Dorsolateral prefrontal cortex (tissue), 120 donors: ENCODE measurements at regions of chr4 and their contacts with region 1.

Region 1: DNA sequence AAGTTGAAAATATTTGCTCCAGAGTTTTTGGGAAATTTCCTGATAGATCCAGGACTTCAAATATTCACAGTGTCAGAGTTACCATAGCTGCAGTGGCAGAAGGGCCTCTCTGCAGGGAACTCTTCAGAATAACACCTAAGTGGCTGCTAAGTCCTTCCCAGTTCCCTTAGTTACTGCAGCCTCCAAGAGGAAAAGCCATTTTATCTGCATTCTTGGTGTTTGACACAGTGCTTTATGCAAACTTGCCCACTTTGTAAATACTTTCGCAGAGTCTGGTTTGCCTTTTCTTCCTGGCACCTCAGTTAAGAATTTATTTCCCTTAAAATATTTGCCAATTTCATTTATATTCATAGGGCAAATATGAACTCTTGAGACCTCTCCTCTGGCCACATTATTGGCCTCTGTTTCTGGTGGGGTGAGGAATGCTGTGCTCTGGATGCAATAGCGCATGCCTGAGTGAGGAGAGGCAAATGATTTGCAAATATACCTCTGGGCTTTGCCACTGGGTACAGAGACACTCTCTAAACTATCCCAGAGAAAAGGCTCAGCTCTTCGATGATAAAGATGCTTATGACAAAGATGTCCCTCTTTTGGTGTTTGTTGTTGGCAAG is 566.3 kb upstream of the NR3C2 start:
- DNase-seq: no peak
- H3K4me3 ChIP-seq: no peak overlapping the region
- H3K27ac ChIP-seq: no peak overlapping the region
- H3K27me3 ChIP-seq: no peaks in the 10 kb centered on the region
- CTCF ChIP-seq: no peak

Region 2: DNA sequence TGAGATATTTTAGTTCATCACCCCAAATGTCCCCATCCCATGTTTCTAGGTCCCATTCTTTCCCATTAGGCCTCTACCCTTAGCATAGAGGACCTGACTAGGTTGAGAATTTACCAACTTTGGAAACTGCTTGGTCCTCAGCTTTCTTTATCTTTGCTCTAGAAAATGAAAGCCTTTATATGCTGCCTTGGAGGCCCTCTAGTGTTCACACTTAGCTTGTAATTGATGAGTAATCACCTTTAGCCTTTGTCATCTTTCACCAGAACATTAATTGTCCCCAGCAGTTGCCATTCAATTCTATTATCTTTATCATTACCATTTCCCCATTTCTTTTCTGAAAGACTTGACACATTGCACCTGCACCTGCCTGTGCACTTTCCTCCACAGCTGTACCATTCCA is 22.9 kb after region 1 on chr4:
- intact Hi-C with region 1: loop called in 1 of 2 experiments (anchors 1 kb)
- DNase-seq: no peak
- H3K4me3 ChIP-seq: no peak overlapping the region
- H3K27ac ChIP-seq: no peak overlapping the region
- H3K27me3 ChIP-seq: no peaks in the 10 kb centered on the region
- CTCF ChIP-seq: peak in 40 of 56 donors; percentile 12 to 57 (median 32)